PC-3 (cell line): ENCODE measurements at regions of chrX and their contacts with region 1.

Region 1: GRCh38 chrX:119067023-119067739 is 5.6 kb upstream of the CT47C1 start:
- DNase-seq: peak; percentile 82
- ATAC-seq: peak; percentile 81
- H3K4me3 ChIP-seq: no peak overlapping the region
- H3K27ac ChIP-seq: no peak overlapping the region
- H3K4me1 ChIP-seq: peaks cover 9% of the 10 kb centered on the region
- H3K27me3 ChIP-seq: no peaks in the 10 kb centered on the region
- CTCF ChIP-seq: peak; percentile 83

Region 2: DNA sequence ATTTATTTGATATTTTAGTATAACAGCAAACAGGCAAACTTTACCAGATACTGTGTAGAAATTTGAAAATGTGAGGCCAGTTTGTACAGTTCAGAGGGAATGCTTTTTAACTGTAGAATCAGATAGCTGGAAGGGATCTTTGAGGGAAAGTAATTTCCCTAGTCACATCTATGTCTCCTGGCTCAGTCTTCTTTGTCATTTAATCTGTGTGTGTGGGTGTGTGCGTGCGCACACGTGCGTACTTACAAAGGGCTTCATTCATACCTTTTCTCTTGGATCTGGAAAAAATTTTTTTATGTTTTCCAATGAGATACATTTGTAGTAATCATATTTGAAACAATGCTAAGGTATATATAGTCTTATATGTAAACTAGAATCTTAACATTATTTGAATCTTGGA is 295.1 kb before region 1 on chrX:
- CTCF ChIA-PET with region 1: interaction called, 13 read pairs
- POLR2A ChIA-PET with region 1: no interaction called
- intact Hi-C with region 1: no loop called
- DNase-seq: no peak
- ATAC-seq: no peak
- H3K4me3 ChIP-seq: no peak overlapping the region
- H3K27ac ChIP-seq: no peak overlapping the region
- H3K4me1 ChIP-seq: peaks cover 17% of the 10 kb centered on the region
- H3K27me3 ChIP-seq: no peaks in the 10 kb centered on the region
- CTCF ChIP-seq: no peak

Region 3: DNA sequence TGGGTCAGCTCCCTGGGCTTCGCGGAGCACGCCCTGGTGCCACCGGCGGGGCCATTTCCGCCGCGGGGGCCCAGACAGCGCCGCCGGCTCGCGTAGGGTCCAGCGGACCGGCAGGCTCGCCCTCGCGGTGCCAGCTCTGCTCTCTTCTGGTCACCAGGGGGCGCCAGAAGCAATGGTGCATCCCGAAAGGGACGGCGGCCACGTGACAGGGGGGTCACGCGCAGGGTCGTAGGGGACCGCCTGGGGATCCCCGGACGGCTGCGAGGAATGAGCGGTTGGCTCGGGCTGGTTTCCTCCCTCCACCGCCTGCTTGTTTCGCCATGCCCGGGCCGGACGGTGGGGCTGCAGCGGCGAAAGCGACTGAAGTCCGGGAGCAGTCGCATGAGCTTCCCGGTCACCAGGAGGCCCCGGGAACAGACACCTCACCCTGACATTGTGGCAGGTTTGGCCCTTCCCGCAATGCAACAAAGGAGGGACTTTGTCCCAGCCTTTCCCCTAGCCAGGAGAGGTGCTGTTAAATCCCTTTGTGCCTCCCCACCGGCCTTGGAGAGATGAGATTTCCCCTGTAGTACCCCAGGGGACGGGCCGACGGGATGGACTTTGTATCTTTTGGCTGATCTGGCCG is 227.7 kb before region 1 on chrX:
- CTCF ChIA-PET with region 1: interaction called, 13 read pairs
- POLR2A ChIA-PET with region 1: no interaction called
- intact Hi-C with region 1: loop called (anchors 1 kb)
- DNase-seq: peak; percentile 63
- ATAC-seq: peak; percentile 97
- H3K4me3 ChIP-seq: peak overlapping the region; percentile 67
- H3K27ac ChIP-seq: no peak overlapping the region
- H3K4me1 ChIP-seq: 0 out of 2 replicates have a peak, but pooled peaks cover 3% of the 10 kb centered on the region
- H3K27me3 ChIP-seq: no peaks in the 10 kb centered on the region
- CTCF ChIP-seq: peak; percentile 67

Region 4: DNA sequence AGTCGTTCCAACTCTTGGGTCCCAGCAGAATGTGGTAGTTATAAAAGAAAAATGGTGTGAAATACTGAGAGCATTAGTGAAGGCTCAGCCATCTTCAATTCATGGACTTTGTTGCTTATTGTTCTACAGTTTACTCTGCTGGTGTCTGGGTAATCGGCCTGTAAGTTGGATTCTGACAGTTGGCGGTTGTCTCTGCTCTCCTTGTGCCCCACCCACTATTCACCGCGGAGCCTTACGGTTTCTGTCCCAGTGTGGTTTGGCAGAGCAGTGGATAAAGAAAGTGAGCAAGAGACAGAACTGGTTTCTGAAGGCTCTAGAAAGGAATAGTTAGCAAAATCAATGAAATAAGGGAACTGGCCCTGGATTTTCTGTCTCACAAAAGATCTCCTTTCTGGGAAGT is 83.7 kb before region 1 on chrX:
- CTCF ChIA-PET with region 1: interaction called, 11 read pairs
- POLR2A ChIA-PET with region 1: no interaction called
- intact Hi-C with region 1: no loop called
- DNase-seq: no peak
- ATAC-seq: no peak
- H3K4me3 ChIP-seq: no peak overlapping the region
- H3K27ac ChIP-seq: no peak overlapping the region
- H3K4me1 ChIP-seq: no peaks in the 10 kb centered on the region
- H3K27me3 ChIP-seq: no peaks in the 10 kb centered on the region
- CTCF ChIP-seq: no peak

Region 5: GRCh38 chrX:119015407-119016237 is 51.6 kb before region 1 on chrX:
- CTCF ChIA-PET with region 1: interaction called, 19 read pairs
- POLR2A ChIA-PET with region 1: no interaction called
- intact Hi-C with region 1: loop called (anchors 2 kb)
- DNase-seq: peak; percentile 98
- ATAC-seq: peak; percentile 88
- H3K4me3 ChIP-seq: no peak overlapping the region
- H3K27ac ChIP-seq: peak overlapping the region; percentile 100
- H3K4me1 ChIP-seq: peaks cover 41% of the 10 kb centered on the region
- H3K27me3 ChIP-seq: no peaks in the 10 kb centered on the region
- CTCF ChIP-seq: no peak

Region 6: DNA sequence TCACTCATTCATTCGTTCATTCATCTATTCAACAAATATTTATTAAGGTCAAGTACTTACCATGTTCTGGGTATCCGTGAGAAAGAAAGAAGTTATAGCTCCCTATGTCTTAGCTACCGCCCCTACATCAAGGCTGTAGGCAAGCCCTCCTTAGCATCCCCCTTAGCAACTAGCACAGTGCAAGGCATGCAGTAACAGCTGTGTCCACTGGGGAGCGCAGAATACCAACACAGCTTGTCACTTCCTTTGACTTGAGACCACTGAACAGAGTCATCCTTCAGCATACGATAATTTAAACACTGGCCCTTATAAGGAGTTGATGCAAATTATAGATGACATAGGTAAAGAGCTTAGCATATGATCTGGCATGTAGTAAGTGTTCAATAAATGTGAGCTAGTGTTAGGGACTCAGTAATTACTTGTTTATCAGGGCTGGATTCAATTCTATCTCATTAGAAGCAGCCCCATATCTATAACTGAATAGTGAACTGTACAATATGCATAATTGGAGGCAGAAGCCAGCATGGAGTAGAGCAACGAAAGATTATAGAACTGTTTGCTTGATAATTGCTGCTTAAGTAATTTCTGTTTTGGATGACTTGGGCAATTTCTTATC is 51.7 kb after region 1 on chrX:
- CTCF ChIA-PET with region 1: interaction called, 10 read pairs
- POLR2A ChIA-PET with region 1: no interaction called
- intact Hi-C with region 1: no loop called
- DNase-seq: peak; percentile 74
- ATAC-seq: peak; percentile 77
- H3K4me3 ChIP-seq: no peak overlapping the region
- H3K27ac ChIP-seq: no peak overlapping the region
- H3K4me1 ChIP-seq: no peaks in the 10 kb centered on the region
- H3K27me3 ChIP-seq: no peaks in the 10 kb centered on the region
- CTCF ChIP-seq: peak; percentile 85

Region 7: DNA sequence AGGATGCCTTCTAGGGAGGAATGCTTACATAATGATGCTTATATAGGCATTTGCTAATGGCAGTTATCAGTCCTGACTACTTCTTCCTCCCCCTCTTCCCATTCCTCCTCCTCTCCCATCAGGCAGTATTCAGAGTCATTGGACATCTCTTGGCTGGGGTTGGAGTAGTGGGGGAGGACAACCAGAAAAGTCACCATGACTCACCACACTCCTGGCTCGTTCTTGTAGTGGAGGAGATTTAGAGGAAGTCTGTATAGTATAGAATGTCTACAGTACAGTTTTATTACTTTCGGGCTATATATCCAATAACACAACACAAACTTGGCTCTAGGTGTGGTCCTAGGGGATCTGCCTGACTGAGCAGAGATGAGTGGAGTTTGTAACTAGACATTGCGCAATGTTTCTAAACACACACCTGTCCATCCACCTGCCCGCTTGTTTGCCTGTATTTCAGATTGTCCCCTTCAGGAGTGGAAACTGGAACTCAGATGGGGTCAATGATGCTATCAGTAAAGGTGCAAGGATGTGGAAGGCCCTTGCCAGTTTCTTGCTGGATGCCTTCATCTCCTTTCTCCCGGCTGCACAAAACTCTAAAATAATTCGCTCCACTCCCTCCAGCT is 88.3 kb after region 1 on chrX:
- CTCF ChIA-PET with region 1: no interaction called
- POLR2A ChIA-PET with region 1: no interaction called
- intact Hi-C with region 1: no loop called
- DNase-seq: peak; percentile 95
- ATAC-seq: peak; percentile 99
- H3K4me3 ChIP-seq: no peak overlapping the region
- H3K27ac ChIP-seq: no peak overlapping the region
- H3K4me1 ChIP-seq: peaks cover 17% of the 10 kb centered on the region
- H3K27me3 ChIP-seq: no peaks in the 10 kb centered on the region
- CTCF ChIP-seq: no peak

Region 8: DNA sequence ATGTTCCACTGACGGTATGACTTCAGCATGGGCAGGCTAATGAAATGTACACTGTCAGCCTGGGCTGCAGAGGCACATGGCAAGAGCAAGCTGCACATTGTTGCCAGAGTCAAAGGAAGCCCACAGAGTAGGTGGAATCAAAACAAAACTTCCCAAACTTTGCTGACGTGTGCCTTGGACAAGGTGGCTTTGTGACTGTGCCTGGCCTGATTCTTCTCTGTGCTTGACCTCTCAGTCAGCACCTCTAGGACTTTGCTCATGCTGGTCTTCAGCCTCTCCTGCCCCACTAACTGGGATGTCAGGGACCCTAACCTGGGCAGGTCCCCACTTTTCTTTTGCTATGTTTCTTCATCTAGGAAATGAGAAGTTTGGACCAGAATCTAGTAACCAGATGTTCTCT is 100.9 kb after region 1 on chrX:
- CTCF ChIA-PET with region 1: no interaction called
- POLR2A ChIA-PET with region 1: no interaction called
- intact Hi-C with region 1: no loop called
- DNase-seq: no peak
- ATAC-seq: no peak
- H3K4me3 ChIP-seq: no peak overlapping the region
- H3K27ac ChIP-seq: no peak overlapping the region
- H3K4me1 ChIP-seq: no peaks in the 10 kb centered on the region
- H3K27me3 ChIP-seq: no peaks in the 10 kb centered on the region
- CTCF ChIP-seq: no peak

Region 9: DNA sequence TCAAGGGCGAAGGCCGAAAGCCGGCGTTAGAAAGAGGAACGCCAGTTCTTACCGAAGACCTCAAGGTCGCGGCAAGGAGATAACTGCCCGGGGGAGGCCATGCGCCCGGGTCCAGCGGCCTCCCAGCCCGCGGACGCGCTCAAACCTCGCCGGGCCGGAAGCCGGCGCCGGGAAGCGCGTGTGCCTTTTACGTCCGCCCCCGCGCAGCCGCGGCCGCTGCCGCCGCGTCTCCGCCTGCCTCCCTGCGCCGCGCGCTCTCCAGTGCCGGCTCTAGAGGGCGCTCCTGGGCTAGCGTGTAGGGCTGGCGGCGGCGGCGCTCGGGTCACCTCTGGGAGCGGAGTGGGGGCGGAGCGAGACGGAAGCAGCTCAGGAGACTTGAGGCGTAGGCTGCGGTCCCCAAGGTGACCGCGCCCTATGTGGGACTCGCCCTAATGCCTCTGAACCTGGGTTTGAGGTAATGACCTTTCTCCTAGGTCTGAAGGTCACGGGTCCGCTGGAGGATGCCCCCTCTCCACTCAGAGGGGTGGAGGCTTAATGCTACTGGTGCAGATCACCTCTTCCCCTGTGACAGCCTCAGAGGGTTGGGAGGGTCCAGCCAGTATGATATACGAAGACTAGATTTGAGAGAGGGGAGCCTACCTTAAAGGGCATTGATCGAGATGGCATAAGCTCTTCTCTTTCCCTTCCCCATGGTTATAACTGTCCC is 401.9 kb after region 1 on chrX:
- CTCF ChIA-PET with region 1: interaction called, 11 read pairs
- POLR2A ChIA-PET with region 1: no interaction called
- intact Hi-C with region 1: no loop called
- DNase-seq: peak; percentile 83
- ATAC-seq: peak; percentile 68
- H3K4me3 ChIP-seq: peak overlapping the region; percentile 98
- H3K27ac ChIP-seq: peak overlapping the region; percentile 72
- H3K4me1 ChIP-seq: peaks cover 8% of the 10 kb centered on the region
- H3K27me3 ChIP-seq: no peaks in the 10 kb centered on the region
- CTCF ChIP-seq: peak; percentile 64